ENCODE measurements at regions of chr12 and their contacts with region 1.

Region 1: DNA sequence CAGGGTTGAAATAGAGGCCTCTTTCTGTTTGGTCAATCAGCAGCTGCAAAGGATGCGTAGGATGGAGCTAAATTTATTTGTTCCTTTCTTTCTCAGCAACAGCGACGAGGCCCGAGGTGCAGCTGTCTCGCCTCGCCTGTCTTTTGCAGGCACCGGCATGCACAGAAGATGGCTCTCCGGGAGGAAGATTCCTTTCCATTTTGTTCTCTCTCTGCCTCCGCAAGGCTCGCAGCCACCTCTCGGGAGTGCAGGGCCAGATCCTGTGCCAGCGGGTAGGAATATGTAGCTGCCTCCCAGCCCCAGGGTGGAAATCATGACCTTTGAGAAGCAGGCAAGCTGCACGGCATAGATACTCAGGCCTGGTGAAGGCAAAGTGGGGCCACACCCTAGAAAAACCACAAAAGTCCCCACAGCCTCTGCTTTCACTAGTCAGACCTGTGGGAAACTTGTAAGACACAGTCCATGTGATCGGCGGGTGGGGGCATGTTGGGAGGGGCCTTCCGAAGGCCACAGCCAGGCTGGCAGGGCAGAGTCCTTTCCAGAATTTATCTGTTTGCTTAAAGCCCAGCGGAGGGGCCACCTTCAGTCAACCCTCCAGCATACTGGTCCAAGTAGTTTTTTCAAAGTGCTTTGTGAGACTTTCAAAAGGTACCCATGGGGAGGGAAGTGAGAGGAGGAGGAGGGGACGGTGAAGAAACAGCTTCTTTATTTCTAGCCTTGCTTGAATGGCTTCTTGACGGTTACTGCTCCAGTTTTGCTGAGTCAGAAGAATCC is at the start of gene MAP1LC3B2:
- DNase-seq: peak; percentile 81
- CTCF ChIP-seq: no peak

Region 2: DNA sequence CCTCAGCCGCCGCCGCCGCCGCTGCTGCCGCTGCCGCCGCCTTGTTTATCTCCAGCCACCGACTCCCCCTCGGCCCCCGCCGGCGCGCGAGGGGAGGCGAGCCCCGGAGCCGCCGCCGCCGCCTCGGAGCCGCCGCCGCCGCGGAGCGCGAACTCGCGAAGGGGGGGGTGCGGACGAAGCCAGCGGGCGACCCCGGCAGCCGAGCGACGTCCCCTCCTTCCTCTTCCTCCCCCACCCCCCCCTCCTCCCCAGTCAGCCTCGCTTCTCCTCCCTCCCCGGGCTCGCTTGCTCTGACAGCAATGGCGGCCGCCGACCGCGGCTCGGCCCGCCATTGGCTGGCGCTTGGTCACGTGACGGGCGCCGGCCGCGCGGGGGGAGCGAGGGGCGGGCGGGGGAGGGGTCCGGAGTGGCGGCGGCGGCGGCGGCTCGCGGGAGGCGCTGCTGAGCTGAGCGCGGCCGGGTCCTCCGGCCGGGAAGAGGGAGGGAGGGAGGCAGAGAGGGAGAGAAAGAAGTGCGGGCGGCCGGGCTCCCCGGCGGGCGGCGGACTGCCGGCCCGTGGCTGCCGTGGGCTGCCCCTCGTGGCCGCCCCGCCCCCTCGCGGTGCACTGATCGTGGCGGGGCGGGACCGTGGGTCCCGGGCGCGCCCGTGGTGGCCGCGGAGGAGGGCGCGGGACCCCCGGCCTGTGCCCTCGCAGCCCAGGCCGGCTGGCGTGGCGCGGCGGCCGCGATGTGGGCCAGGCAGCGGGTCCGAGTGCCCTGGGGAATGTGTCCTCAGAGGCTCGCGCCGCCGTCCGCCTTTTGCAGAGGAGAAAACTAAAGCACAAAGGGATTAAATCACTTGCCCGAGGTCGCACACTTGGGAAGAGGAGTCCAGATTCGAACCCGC is 281.7 kb before region 1 on chr12 and contains the start of gene MED13L:
- in situ Hi-C with region 1: loop called (anchors 25 kb)
- DNase-seq: peak; percentile 99
- CTCF ChIP-seq: peak; percentile 55

Region 3: GRCh38 chr12:116434155-116435011 is 125.0 kb before region 1 on chr12:
- in situ Hi-C with region 1: no loop called
- DNase-seq: no peak
- CTCF ChIP-seq: no peak

Measured in GM13977 (cell line).